Left lung (tissue), 14 donors: ENCODE measurements at regions of chr1 and their contacts with region 1.

Region 1: GRCh38 chr1:183227963-183228649 is 42.0 kb downstream of the LAMC2 start:
- DNase-seq: no peak
- ATAC-seq: peak; percentile 89
- H3K4me3 ChIP-seq: no peak overlapping the region
- H3K27ac ChIP-seq: no peak overlapping the region
- H3K4me1 ChIP-seq: no peaks in the 10 kb centered on the region
- H3K27me3 ChIP-seq: no peaks in the 10 kb centered on the region
- CTCF ChIP-seq: peak; percentile 60 to 85

Region 2: DNA sequence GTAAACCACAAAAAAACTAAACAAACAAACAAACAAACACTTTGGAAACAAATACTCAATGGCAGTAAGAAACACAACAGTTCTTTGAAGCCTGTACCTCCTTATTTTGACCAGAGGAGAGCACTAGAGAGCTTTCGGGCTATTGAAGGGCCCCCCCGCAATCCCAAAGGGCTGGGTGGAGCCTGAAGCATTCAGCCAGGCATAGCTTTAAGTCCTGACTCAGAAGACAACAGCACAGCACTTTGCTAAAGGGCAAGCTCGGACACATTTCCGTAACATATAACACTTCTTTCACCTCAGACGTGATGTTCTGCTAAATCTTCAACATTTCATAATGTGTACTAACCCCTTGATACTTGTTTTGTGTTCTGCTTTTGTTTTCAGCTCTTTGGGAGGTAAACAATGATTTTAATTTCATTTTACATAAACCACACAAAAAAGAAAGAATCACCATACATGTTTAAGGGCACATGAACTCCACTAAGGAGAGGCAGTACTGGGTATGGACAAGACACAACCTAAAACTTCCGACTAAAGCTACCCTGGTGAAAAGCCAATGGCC is 265.5 kb before region 1 on chr1:
- intact Hi-C with region 1: loop called in 1 of 2 experiments (anchors 10 kb)
- DNase-seq: peak in 3 of 4 donors; percentile 55 to 91 (median 77)
- ATAC-seq: peak; percentile 100
- H3K4me3 ChIP-seq: no peak overlapping the region
- H3K27ac ChIP-seq: peak overlapping the region; percentile 14 to 71
- H3K4me1 ChIP-seq: peaks cover 0 to 7% of the 10 kb centered on the region in 2 donors
- H3K27me3 ChIP-seq: no peaks in the 10 kb centered on the region
- CTCF ChIP-seq: peak; percentile 62 to 69